IMR-90 (cell line): ENCODE measurements at regions of chr2 and their contacts with region 1.

Region 1: DNA sequence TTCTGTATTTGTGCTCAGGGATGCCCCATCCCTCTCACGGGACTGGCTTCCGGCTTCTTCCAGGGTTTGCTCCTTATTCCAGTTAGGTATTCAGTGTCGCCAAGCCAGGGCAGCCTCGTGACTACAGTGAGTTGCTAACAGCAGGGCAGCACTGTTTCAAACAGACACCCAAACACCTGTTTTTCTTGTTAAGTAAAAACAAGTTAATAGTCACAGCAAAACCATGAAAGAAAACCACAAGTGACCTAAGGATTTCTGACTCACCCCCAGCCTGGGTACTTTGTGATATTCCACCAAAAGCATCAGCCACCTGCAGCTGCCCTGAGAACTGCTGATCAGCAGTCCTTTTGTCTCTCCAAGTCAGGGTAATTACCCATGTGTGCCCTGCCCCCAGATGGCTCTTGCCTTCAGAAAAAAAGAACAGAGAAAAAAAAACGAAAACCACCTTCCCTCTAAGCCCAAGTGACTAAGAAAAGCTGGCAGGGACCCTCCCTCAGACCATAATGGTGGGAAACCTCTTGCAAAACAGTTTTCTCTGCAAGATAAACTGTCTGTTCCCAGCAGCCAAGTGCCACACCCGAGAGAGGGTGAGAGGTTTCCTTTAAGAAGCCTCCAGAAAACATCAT is 178.2 kb downstream of the ANAPC1 start:
- DNase-seq: peak; percentile 97
- ATAC-seq: peak; percentile 56
- H3K4me3 ChIP-seq: no peak overlapping the region
- H3K27ac ChIP-seq: no peak overlapping the region
- H3K4me1 ChIP-seq: peaks cover 15% of the 10 kb centered on the region
- H3K27me3 ChIP-seq: peaks cover 35% of the 10 kb centered on the region
- CTCF ChIP-seq: no peak
- POLR2A ChIP-seq: no peak
- RAD21 ChIP-seq: no peak

Region 2: GRCh38 chr2:110804915-110805314 is 900.9 kb before region 1 on chr2:
- CTCF ChIA-PET with region 1: no interaction called
- POLR2A ChIA-PET with region 1: no interaction called
- dilution Hi-C with region 1: no loop called
- in situ Hi-C with region 1: loop called (anchors 25 kb)
- intact Hi-C with region 1: no loop called
- DNase-seq: no peak
- ATAC-seq: no peak
- H3K4me3 ChIP-seq: no peak overlapping the region
- H3K27ac ChIP-seq: no peak overlapping the region
- H3K4me1 ChIP-seq: no peaks in the 10 kb centered on the region
- H3K27me3 ChIP-seq: peaks cover 46% of the 10 kb centered on the region
- CTCF ChIP-seq: no peak
- POLR2A ChIP-seq: no peak
- RAD21 ChIP-seq: no peak

Region 3: DNA sequence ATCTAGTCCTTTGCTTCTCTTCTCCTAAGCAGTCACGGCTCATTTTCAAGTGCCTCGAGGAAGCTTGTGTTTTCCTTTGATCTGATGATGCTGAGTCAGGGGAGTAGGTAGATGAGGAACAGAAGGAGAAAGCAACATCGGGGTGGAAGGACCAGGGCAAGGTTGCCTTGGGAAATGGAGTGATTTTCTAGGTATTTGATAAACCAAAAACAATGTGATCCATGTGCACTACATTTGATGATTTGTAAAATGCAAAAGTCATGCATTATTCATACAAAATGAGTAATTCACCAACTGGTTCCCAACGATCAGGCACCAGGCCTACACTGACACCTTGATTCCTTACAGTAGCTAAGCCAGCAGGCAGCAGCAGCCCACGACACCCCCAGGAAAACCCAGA is 27.2 kb before region 1 on chr2:
- CTCF ChIA-PET with region 1: no interaction called
- POLR2A ChIA-PET with region 1: no interaction called
- dilution Hi-C with region 1: no loop called
- in situ Hi-C with region 1: no loop called
- intact Hi-C with region 1: no loop called
- DNase-seq: peak; percentile 38
- ATAC-seq: no peak
- H3K4me3 ChIP-seq: no peak overlapping the region
- H3K27ac ChIP-seq: no peak overlapping the region
- H3K4me1 ChIP-seq: peaks cover 4% of the 10 kb centered on the region; the same call in 1 of the 2 replicates
- H3K27me3 ChIP-seq: peaks cover 13% of the 10 kb centered on the region
- CTCF ChIP-seq: no peak
- POLR2A ChIP-seq: no peak
- RAD21 ChIP-seq: no peak